BJ (cell line): ENCODE measurements at regions of chr20 and their contacts with region 1.

Region 1: GRCh38 chr20:58112017-58112781 is 116.3 kb downstream of the ANKRD60 start:
- DNase-seq: no peak
- H3K4me3 ChIP-seq: no peak overlapping the region
- H3K27me3 ChIP-seq: no peaks in the 10 kb centered on the region; the same call in 1 of the 2 replicates
- CTCF ChIP-seq: no peak

Region 2: GRCh38 chr20:58131551-58132142 is 19.4 kb after region 1 on chr20:
- CTCF ChIA-PET with region 1: interaction called, 12 read pairs
- POLR2A ChIA-PET with region 1: no interaction called
- DNase-seq: peak; percentile 31
- H3K4me3 ChIP-seq: no peak overlapping the region
- H3K27me3 ChIP-seq: peaks cover 17% of the 10 kb centered on the region
- CTCF ChIP-seq: no peak

Region 3: DNA sequence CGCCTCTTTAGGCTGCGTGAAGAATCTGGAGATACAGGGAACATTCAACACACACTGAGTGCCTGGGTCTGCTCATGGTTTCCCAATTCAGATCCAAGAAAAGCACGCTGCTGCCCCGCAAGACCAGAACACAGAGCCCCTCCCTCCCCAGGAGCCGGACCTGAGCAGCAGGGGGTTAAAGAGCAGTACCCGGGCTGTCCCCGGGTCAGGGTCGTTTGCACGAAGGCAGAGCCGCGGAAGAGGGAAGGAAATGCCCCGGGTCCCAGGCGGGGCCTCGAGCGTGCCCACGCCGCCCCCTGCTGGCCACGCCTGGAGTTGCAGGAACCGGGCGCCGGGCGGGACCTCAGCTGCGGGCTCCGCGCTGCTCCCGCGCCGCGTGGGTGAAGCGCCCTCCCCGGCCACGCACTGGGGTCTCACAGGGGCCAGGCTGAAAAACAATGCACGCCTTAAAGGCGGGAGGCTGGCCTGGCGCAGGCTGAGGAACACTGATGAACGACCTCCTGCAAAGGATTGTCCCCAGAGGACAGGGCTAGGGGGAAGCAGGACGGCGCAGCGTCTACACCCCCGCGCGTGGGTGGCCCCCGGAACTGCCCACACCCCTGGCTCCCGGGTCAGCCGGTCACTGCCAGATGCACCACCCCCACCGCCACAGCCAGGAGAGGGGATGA is 67.4 kb after region 1 on chr20:
- CTCF ChIA-PET with region 1: interaction called, 10 read pairs
- POLR2A ChIA-PET with region 1: no interaction called
- DNase-seq: no peak
- H3K4me3 ChIP-seq: peak overlapping the region; percentile 21; the same call in 1 of the 2 replicates
- H3K27me3 ChIP-seq: peaks cover 11% of the 10 kb centered on the region
- CTCF ChIP-seq: peak; percentile 82

Region 4: GRCh38 chr20:58209652-58210397 is 97.6 kb after region 1 on chr20:
- CTCF ChIA-PET with region 1: no interaction called
- POLR2A ChIA-PET with region 1: no interaction called
- DNase-seq: no peak
- H3K4me3 ChIP-seq: no peak overlapping the region
- H3K27me3 ChIP-seq: peaks cover 10% of the 10 kb centered on the region
- CTCF ChIP-seq: peak; percentile 100

Region 5: GRCh38 chr20:58271606-58272402 is 159.6 kb after region 1 on chr20:
- CTCF ChIA-PET with region 1: no interaction called
- POLR2A ChIA-PET with region 1: no interaction called
- DNase-seq: no peak
- H3K4me3 ChIP-seq: no peak overlapping the region
- H3K27me3 ChIP-seq: no peaks in the 10 kb centered on the region
- CTCF ChIP-seq: no peak

Region 6: GRCh38 chr20:58349586-58349985 is 237.4 kb after region 1 on chr20:
- CTCF ChIA-PET with region 1: no interaction called
- POLR2A ChIA-PET with region 1: no interaction called
- DNase-seq: no peak
- H3K4me3 ChIP-seq: no peak overlapping the region
- H3K27me3 ChIP-seq: no peaks in the 10 kb centered on the region
- CTCF ChIP-seq: peak; percentile 12; the same call in 1 of the 2 replicates